ENCODE measurements at regions of chr7 and their contacts with region 1.

Region 1: DNA sequence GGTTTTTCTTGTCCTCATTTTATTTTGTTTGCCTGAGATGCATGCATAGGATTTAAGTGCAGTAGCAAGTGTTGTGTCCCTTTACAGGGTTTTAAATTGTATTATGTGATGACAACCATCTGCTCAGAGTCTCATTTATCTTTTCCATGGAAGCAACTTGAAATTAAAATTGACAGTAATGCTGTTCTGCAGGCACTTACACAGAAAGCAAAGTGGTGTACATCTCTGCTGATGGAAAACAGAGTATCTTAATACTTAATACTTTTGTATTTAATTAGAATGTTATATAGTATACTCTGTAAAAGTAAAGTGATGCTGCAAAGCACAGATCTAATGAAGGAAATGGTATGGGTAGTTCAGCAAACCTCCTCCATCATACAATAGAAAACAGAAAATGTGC is 482.9 kb downstream of the POM121L12 start:
- DNase-seq: no peak
- H3K4me3 ChIP-seq: no peak overlapping the region
- H3K27ac ChIP-seq: no peak overlapping the region
- H3K4me1 ChIP-seq: no peaks in the 10 kb centered on the region
- H3K27me3 ChIP-seq: no peaks in the 10 kb centered on the region
- CTCF ChIP-seq: no peak

Region 2: GRCh38 chr7:53466371-53466770 is 51.9 kb before region 1 on chr7:
- intact Hi-C with region 1: loop called (anchors 10 kb)
- DNase-seq: no peak
- H3K4me3 ChIP-seq: no peak overlapping the region
- H3K27ac ChIP-seq: no peak overlapping the region
- H3K4me1 ChIP-seq: no peaks in the 10 kb centered on the region
- H3K27me3 ChIP-seq: no peaks in the 10 kb centered on the region
- CTCF ChIP-seq: no peak

Region 3: GRCh38 chr7:53690411-53690810 is 172.1 kb after region 1 on chr7:
- intact Hi-C with region 1: no loop called
- DNase-seq: no peak
- H3K4me3 ChIP-seq: no peak overlapping the region
- H3K27ac ChIP-seq: no peak overlapping the region
- H3K4me1 ChIP-seq: no peaks in the 10 kb centered on the region
- H3K27me3 ChIP-seq: no peaks in the 10 kb centered on the region
- CTCF ChIP-seq: no peak